Activated CD8-positive, alpha-beta T cell treated with anti-CD3 and anti-CD28 coated beads for 36 hours (primary cell): ENCODE measurements at regions of chr19 and their contacts with region 1.

Region 1: DNA sequence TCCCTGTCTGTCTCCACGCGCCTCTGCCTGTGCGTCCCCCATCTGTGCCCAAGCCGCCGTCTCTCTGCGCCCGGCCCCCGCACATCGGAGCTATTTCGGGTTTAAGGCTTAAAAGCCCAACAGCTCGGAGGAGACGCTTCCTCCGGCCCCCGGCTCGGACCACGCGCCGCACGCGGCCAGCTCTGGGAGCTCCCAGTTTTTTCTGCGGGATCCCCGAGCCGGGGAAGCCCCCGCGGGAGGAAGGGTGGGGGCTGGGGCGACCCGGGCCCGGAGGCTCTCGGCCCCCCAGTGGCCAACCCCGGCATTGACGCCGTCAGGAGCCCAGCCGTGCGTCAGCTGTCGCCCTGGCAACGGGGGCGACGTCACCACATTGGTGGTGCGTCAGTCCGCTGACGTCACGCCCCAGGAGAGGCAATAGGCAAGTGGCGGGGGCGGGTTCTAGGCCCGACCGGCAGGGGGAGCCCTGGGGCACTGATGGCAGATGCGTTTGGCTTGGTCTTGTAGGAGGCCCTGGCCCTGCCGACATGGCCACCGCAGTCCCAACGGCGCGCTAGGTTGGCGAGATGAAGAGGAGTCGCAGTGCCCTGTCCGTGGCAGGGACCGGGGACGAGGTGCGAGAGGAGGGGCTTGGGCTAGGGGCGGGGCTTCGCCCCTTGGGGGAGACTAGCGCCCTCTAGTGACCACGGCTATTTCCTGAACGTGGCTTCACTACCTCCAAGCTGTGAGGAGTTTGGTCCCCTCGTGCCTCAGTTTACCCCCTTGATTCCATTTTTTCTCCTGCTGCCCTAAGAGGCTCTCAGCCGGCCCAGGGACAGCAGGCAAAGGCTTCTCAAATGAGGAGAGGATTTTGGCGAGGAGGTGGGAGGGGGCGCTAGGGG is 3.7 kb upstream of the PDE4A start:
- DNase-seq: peak; percentile 97
- ATAC-seq: peak; percentile 50
- H3K4me3 Mint-ChIP-seq: peak overlapping the region; percentile 63
- H3K27ac Mint-ChIP-seq: peak overlapping the region; percentile 84
- H3K4me1 Mint-ChIP-seq: peaks cover 59% of the 10 kb centered on the region
- H3K27me3 Mint-ChIP-seq: peaks cover 13% of the 10 kb centered on the region
- CTCF ChIP-seq: peak; percentile 100

Region 2: GRCh38 chr19:10431943-10432735 is 15.5 kb after region 1 on chr19:
- CTCF ChIA-PET with region 1: interaction called, 587 read pairs
- POLR2A ChIA-PET with region 1: interaction called, 23 read pairs
- intact Hi-C with region 1: no loop called
- DNase-seq: peak; percentile 73
- ATAC-seq: peak; percentile 35
- H3K4me3 Mint-ChIP-seq: peak overlapping the region; percentile 70
- H3K27ac Mint-ChIP-seq: peak overlapping the region; percentile 81
- H3K4me1 Mint-ChIP-seq: peaks cover 57% of the 10 kb centered on the region
- H3K27me3 Mint-ChIP-seq: peaks cover 30% of the 10 kb centered on the region
- CTCF ChIP-seq: no peak